ENCODE measurements at regions of chr13 and their contacts with region 1.

Region 1: GRCh38 chr13:34941835-34942731 is at the start of gene NBEA:
- DNase-seq: peak; percentile 74 to 87
- ATAC-seq: peak; percentile 85 to 94 (median 90)
- H3K4me3 ChIP-seq: peak within 1 kb of the TSS; percentile 79 to 96 (median 86)
- H3K27ac ChIP-seq: peak within 1 kb of the TSS; percentile 54 to 85 (median 78)
- H3K4me1 ChIP-seq: peaks cover 0 to 34% (median 25%) of the 10 kb centered on the region in 9 donors
- H3K27me3 ChIP-seq: peaks cover 0 to 23% (median 0%) of the 10 kb centered on the region in 7 donors
- CTCF ChIP-seq: peak; percentile 15 to 68 (median 49)
- total RNA-seq, gene NBEA: 18.4 to 30.6 (median 26.3) TPM

Region 2: DNA sequence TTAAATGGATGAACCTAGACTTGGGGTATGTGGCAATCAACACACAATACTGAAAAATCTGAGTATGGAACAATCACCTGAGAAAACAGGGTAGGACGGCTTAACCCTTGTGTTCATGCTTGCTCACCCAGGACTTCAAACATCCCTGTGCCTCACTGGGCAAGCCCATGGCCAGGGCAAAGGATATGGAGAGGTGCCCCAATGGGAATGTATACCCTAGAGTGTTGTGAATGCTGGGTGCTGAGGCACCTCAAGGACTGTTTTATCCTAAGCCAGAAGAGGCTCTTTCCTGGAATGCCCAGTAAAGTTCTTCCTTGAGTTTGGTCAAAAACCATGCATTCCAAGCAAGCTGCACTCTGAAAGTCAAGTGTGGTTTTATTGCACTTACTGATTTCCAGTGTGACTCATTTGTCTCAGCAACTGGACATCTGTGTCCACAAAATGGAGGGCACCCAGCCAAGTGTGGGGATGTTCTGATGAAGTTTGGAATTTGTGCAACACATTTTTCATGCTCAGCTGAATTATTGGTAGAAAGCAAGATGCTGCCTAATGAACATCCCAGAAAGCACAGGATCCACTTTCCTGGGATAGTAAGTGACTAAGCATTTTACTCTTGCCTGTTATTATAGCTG is 592.9 kb before region 1 on chr13:
- intact Hi-C with region 1: loop called in 1 of 10 experiments (anchors 10 kb)
- DNase-seq: peak; percentile 41 to 77
- ATAC-seq: peak in 6 of 8 donors; percentile 35 to 80 (median 68)
- H3K4me3 ChIP-seq: no peak overlapping the region
- H3K27ac ChIP-seq: peak overlapping the region in 1 of 10 donors; percentile 36
- H3K4me1 ChIP-seq: peaks cover 0 to 26% (median 11%) of the 10 kb centered on the region in 9 donors
- H3K27me3 ChIP-seq: no peaks in the 10 kb centered on the region
- CTCF ChIP-seq: no peak

Region 3: GRCh38 chr13:34733736-34734135 is 208.3 kb before region 1 on chr13:
- intact Hi-C with region 1: loop called in 1 of 10 experiments (anchors 10 kb)
- DNase-seq: no peak
- ATAC-seq: peak in 3 of 8 donors; percentile 26 to 55 (median 51)
- H3K4me3 ChIP-seq: no peak overlapping the region
- H3K27ac ChIP-seq: no peak overlapping the region
- H3K4me1 ChIP-seq: peaks cover 0 to 22% (median 0%) of the 10 kb centered on the region in 9 donors
- H3K27me3 ChIP-seq: no peaks in the 10 kb centered on the region
- CTCF ChIP-seq: no peak

Region 4: DNA sequence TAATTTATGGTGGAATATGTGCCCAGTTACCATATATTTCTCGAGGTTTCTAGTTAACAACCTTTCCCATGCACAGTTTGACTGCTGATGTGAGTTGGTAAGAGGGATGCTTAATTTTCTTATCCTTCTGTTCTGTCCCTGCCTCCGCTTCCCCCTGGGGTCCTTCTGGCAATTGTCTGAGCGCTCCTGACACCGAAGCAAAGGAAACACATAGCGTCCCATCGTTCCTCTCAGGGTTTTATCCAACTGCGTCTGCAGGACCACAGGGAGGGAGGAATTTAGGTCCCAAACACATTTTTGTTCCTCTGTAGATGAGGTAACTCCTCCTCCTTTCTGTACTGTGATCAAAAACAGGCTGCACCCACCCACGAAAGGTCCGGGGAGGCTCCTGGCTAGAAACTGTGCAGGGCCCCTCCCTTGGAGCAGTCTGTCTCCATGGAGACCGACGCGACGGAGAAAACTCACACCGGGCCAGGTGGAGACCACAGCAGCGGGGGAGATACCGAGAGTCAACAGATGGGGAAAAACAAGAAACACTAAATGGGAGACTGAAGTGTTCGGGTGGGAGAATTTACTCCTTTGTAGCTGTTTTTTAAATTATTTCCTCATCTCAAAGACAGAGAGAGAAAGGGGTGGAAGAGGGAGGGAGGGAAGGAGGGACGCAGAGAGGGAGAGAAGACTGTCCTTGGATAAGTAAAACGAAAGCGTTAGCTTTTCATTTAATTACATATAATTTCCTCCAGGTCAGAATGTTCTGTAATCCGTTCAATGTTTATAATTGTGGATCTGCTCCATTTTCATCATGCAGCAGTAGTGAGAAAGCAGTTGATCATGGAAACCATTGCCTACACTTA is 191.8 kb before region 1 on chr13:
- intact Hi-C with region 1: loop called in 1 of 10 experiments (anchors 10 kb)
- DNase-seq: peak; percentile 26 to 45
- ATAC-seq: peak in 5 of 8 donors; percentile 12 to 56 (median 33)
- H3K4me3 ChIP-seq: peak overlapping the region in 7 of 10 donors; percentile 17 to 44 (median 39)
- H3K27ac ChIP-seq: peak overlapping the region in 2 of 10 donors; percentile 17 to 81
- H3K4me1 ChIP-seq: peaks cover 11 to 42% (median 28%) of the 10 kb centered on the region in 9 donors
- H3K27me3 ChIP-seq: no peaks in the 10 kb centered on the region
- CTCF ChIP-seq: no peak

Region 5: DNA sequence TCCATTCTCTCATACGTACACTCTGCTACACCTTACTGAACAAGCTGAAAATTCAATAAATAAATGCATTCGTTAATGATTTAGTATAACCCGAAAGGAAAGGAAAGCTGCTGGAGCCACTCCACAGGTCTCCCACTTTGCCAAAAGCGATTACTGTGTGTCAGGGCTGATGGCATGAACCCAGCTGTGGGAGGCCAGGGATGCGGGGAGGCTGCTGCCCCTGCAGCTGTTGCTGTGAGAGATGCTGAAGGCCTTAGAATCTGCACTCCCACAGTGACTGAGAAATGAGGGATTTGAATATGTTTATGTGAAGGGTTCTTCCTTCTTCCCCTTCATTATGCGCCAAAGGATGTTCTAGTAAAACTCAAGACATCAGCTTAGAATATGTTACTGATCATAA is 58.7 kb before region 1 on chr13:
- intact Hi-C with region 1: loop called in 1 of 10 experiments (anchors 5 kb)
- DNase-seq: no peak
- ATAC-seq: no peak
- H3K4me3 ChIP-seq: no peak overlapping the region
- H3K27ac ChIP-seq: no peak overlapping the region
- H3K4me1 ChIP-seq: peaks cover 0 to 33% (median 5%) of the 10 kb centered on the region in 9 donors
- H3K27me3 ChIP-seq: no peaks in the 10 kb centered on the region
- CTCF ChIP-seq: no peak

Measured in heart right ventricle (tissue), 16 donors.